ENCODE measurements at regions of chr21 and their contacts with region 1.

Region 1: GRCh38 chr21:25561668-25562641 is 45.3 kb downstream of the MRPL39 start:
- DNase-seq: peak; percentile 80
- ATAC-seq: peak; percentile 69
- H3K4me3 ChIP-seq: peak overlapping the region; percentile 61 to 86 (median 70)
- H3K4me3 Mint-ChIP-seq: peak overlapping the region; percentile 100
- H3K27ac ChIP-seq: peak overlapping the region; percentile 78 to 83
- H3K27ac Mint-ChIP-seq: peak overlapping the region; percentile 98
- H3K4me1 ChIP-seq: peaks cover 34 to 42% of the 10 kb centered on the region in 2 donors
- H3K4me1 Mint-ChIP-seq: peaks cover 60% of the 10 kb centered on the region
- H3K27me3 ChIP-seq: no peaks in the 10 kb centered on the region
- H3K27me3 Mint-ChIP-seq: no peaks in the 10 kb centered on the region
- CTCF ChIP-seq: peak; percentile 3

Region 2: GRCh38 chr21:25176637-25177412 is 385.1 kb before region 1 on chr21:
- CTCF ChIA-PET with region 1: no interaction called
- POLR2A ChIA-PET with region 1: no interaction called
- intact Hi-C with region 1: loop called (anchors 10 kb)
- DNase-seq: peak; percentile 77
- ATAC-seq: peak; percentile 80
- H3K4me3 ChIP-seq: peak overlapping the region in 1 of 5 experiments; percentile 34
- H3K4me3 Mint-ChIP-seq: peak overlapping the region; percentile 3
- H3K27ac ChIP-seq: peak overlapping the region; percentile 83 to 92
- H3K27ac Mint-ChIP-seq: peak overlapping the region; percentile 53
- H3K4me1 ChIP-seq: peaks cover 40 to 46% of the 10 kb centered on the region in 2 donors
- H3K4me1 Mint-ChIP-seq: peaks cover 62% of the 10 kb centered on the region
- H3K27me3 ChIP-seq: no peaks in the 10 kb centered on the region
- H3K27me3 Mint-ChIP-seq: no peaks in the 10 kb centered on the region
- CTCF ChIP-seq: no peak

Region 3: GRCh38 chr21:25573409-25574206 is 11.7 kb after region 1 on chr21:
- CTCF ChIA-PET with region 1: interaction called, 12 read pairs
- POLR2A ChIA-PET with region 1: no interaction called
- intact Hi-C with region 1: loop called (anchors 1 kb)
- DNase-seq: peak; percentile 76
- ATAC-seq: peak; percentile 69
- H3K4me3 ChIP-seq: peak overlapping the region; percentile 1 to 44 (median 25)
- H3K4me3 Mint-ChIP-seq: peak overlapping the region; percentile 66
- H3K27ac ChIP-seq: peak overlapping the region; percentile 73 to 87
- H3K27ac Mint-ChIP-seq: peak overlapping the region; percentile 85
- H3K4me1 ChIP-seq: peaks cover 27 to 30% of the 10 kb centered on the region in 2 donors
- H3K4me1 Mint-ChIP-seq: peaks cover 74% of the 10 kb centered on the region
- H3K27me3 ChIP-seq: no peaks in the 10 kb centered on the region
- H3K27me3 Mint-ChIP-seq: no peaks in the 10 kb centered on the region
- CTCF ChIP-seq: no peak

Region 4: GRCh38 chr21:25734904-25735645 is 173.1 kb after region 1 on chr21 and contains the starts of genes ATP5PF and GABPA:
- CTCF ChIA-PET with region 1: no interaction called
- POLR2A ChIA-PET with region 1: no interaction called
- intact Hi-C with region 1: loop called (anchors 1 kb)
- DNase-seq: peak; percentile 99
- ATAC-seq: peak; percentile 83
- H3K4me3 ChIP-seq: peak within 1 kb of the TSS; percentile 69 to 99 (median 95)
- H3K4me3 Mint-ChIP-seq: peak within 1 kb of the TSS; percentile 100
- H3K27ac ChIP-seq: peak within 1 kb of the TSS; percentile 86 to 87
- H3K27ac Mint-ChIP-seq: peak within 1 kb of the TSS; percentile 100
- H3K4me1 ChIP-seq: peaks cover 44 to 46% of the 10 kb centered on the region in 2 donors
- H3K4me1 Mint-ChIP-seq: peaks cover 58% of the 10 kb centered on the region
- H3K27me3 ChIP-seq: no peaks in the 10 kb centered on the region
- H3K27me3 Mint-ChIP-seq: no peaks in the 10 kb centered on the region
- CTCF ChIP-seq: no peak
- total RNA-seq, gene ATP5PF: 34.1 and 36.6 TPM in 2 replicates
- total RNA-seq, gene GABPA: 29.7 and 32.9 TPM in 2 replicates

Region 5: DNA sequence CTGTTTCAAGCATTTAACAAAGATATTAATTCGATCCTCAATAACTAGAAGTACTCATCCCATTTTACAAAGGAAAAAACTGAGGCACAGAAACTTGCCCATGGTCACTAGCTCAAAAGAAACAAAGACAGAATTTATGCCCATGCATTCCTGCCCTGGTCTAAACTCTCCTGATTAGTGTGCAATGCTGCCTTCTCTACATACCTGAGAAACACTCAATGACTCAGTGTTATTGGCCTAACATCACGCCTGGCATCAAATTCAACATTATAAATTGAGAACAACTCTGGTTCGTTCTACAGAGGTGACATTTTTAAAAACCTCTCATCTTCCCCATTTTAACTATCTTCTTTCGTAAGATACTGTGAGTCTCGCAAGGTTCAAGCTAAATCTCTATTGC is 603.4 kb after region 1 on chr21:
- CTCF ChIA-PET with region 1: no interaction called
- POLR2A ChIA-PET with region 1: no interaction called
- intact Hi-C with region 1: no loop called
- DNase-seq: no peak
- ATAC-seq: no peak
- H3K4me3 ChIP-seq: no peak overlapping the region
- H3K4me3 Mint-ChIP-seq: no peak overlapping the region
- H3K27ac ChIP-seq: no peak overlapping the region
- H3K27ac Mint-ChIP-seq: no peak overlapping the region
- H3K4me1 ChIP-seq: peaks cover 4 to 11% of the 10 kb centered on the region in 2 donors
- H3K4me1 Mint-ChIP-seq: peaks cover 11% of the 10 kb centered on the region
- H3K27me3 ChIP-seq: peaks cover 0 to 4% (median 0%) of the 10 kb centered on the region in 4 experiments
- H3K27me3 Mint-ChIP-seq: no peaks in the 10 kb centered on the region
- CTCF ChIP-seq: no peak